ENCODE measurements at regions of chr16 and their contacts with region 1.

Region 1: GRCh38 chr16:69709456-69710084 is 16.8 kb downstream of the NQO1 start:
- DNase-seq: no peak
- H3K4me3 ChIP-seq: no peak overlapping the region
- H3K27ac ChIP-seq: peak overlapping the region in 3 of 4 donors; percentile 8 to 61 (median 52)
- H3K4me1 ChIP-seq: peaks cover 0 to 22% (median 9%) of the 10 kb centered on the region in 4 donors
- H3K27me3 ChIP-seq: no peaks in the 10 kb centered on the region
- CTCF ChIP-seq: peak; percentile 44 to 80 (median 60)
- EP300 ChIP-seq: no peak
- POLR2A ChIP-seq: no peak

Region 2: GRCh38 chr16:69754469-69755310 is 45.1 kb after region 1 on chr16 and contains the start of gene NOB1:
- intact Hi-C with region 1: loop called (anchors 1 kb)
- DNase-seq: peak; percentile 98
- H3K4me3 ChIP-seq: peak within 1 kb of the TSS; percentile 70 to 96 (median 76)
- H3K27ac ChIP-seq: peak within 1 kb of the TSS; percentile 63 to 81 (median 76)
- H3K4me1 ChIP-seq: peaks cover 0 to 23% (median 21%) of the 10 kb centered on the region in 4 donors
- H3K27me3 ChIP-seq: no peaks in the 10 kb centered on the region
- CTCF ChIP-seq: peak; percentile 92 to 100 (median 99)
- EP300 ChIP-seq: no peak
- POLR2A ChIP-seq: peak; percentile 11 to 20
- total RNA-seq, gene NOB1: 31.0 to 40.0 (median 35.7) TPM

Measured in sigmoid colon (tissue), 7 donors.